Psoas muscle (tissue), 8 donors: ENCODE measurements at regions of chr12 and their contacts with region 1.

Region 1: GRCh38 chr12:12716793-12717585 is at the start of gene CDKN1B:
- DNase-seq: peak; percentile 91 to 96
- ATAC-seq: peak; percentile 95 to 97 (median 96)
- H3K4me3 ChIP-seq: peak within 1 kb of the TSS; percentile 84
- H3K27ac ChIP-seq: peak within 1 kb of the TSS; percentile 98
- H3K4me1 ChIP-seq: peaks cover 48% of the 10 kb centered on the region
- H3K27me3 ChIP-seq: no peaks in the 10 kb centered on the region
- CTCF ChIP-seq: no peak
- total RNA-seq, gene CDKN1B: 32.2 to 61.0 (median 38.0) TPM

Region 2: DNA sequence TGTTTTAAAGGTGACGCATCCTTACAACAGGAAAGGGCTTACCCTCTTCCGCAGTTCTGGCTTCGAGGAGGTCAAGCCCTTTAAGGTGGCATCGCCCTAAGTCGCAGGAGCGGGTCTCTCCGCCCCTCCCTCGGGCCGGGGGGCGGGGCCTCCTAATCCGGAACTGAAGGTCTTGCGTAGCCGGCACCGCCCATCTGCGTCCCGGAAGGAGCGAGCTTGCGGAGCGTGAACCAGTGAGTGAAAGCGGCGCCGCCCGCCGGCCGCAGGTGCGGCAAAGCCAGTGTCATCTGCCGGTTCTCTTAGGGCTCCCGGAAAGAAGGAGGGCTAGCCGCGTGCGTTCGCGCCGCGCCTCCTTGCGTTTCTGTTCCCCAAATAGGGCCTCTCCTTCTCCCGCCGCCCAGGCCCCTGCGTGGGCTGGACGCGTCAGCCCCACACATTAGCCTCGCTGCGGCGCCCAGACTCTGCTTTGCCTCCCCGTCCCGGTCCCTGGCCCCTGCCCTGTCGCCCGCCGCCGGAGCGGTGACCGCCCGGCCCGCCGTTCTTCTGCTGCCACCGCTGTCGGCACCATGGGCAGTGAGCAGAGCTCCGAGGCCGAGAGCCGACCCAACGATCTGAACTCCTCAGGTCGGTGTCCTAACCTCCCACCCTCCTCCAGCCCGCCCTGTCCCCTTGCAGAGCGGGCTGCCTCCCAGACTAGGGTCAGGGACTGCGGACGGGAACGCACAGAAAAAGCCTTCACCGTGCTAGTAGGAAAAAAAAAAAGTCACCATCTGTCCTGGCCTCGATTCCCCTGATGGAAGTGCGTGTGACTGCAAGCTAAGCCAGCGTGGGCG is 359.9 kb before region 1 on chr12 and contains the start of gene BORCS5:
- intact Hi-C with region 1: loop called in 1 of 2 experiments (anchors 10 kb)
- DNase-seq: peak; percentile 98
- ATAC-seq: peak; percentile 97 to 99 (median 98)
- H3K4me3 ChIP-seq: peak within 1 kb of the TSS; percentile 99
- H3K27ac ChIP-seq: peak within 1 kb of the TSS; percentile 100
- H3K4me1 ChIP-seq: peaks cover 18% of the 10 kb centered on the region
- H3K27me3 ChIP-seq: no peaks in the 10 kb centered on the region
- CTCF ChIP-seq: no peak
- total RNA-seq, gene BORCS5: 10.7 to 13.3 (median 11.8) TPM